ENCODE measurements at regions of chr20 and their contacts with region 1.

Region 1: DNA sequence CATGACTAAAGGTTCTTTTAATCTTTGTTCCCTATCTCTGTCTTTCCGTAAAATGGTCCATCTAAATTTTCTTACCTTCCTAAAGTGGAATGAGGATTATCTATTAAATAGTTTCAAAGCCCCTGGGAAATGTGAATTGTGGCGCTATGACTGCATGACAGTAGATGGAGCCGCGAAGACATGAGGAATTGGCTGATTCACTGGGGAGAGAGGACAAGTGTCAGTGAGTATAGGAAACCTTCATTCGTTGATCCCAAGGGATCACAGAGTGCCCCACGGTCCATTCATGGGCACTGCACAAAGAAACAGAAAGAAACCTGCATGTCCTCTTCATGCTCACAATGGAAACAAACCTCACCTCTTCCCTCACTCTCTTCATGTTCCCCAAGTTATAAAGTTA is 479.3 kb upstream of the BTBD3 start:
- DNase-seq: no peak
- H3K4me3 ChIP-seq: no peak overlapping the region
- H3K4me3 Mint-ChIP-seq: no peak overlapping the region
- H3K27ac Mint-ChIP-seq: no peak overlapping the region
- H3K4me1 ChIP-seq: peaks cover 9% of the 10 kb centered on the region; the same call in 1 of the 2 replicates
- H3K4me1 Mint-ChIP-seq: peaks cover 4% of the 10 kb centered on the region
- H3K27me3 ChIP-seq: no peaks in the 10 kb centered on the region
- H3K27me3 Mint-ChIP-seq: no peaks in the 10 kb centered on the region
- CTCF ChIP-seq: no peak

Region 2: GRCh38 chr20:11454966-11455799 is 16.8 kb after region 1 on chr20:
- CTCF ChIA-PET with region 1: no interaction called
- POLR2A ChIA-PET with region 1: no interaction called
- intact Hi-C with region 1: loop called (anchors 1 kb)
- DNase-seq: peak; percentile 82 to 92
- H3K4me3 ChIP-seq: peak overlapping the region; percentile 23
- H3K4me3 Mint-ChIP-seq: peak overlapping the region; percentile 73
- H3K27ac Mint-ChIP-seq: peak overlapping the region; percentile 92
- H3K4me1 ChIP-seq: peaks cover 69% of the 10 kb centered on the region
- H3K4me1 Mint-ChIP-seq: peaks cover 63% of the 10 kb centered on the region
- H3K27me3 ChIP-seq: no peaks in the 10 kb centered on the region
- H3K27me3 Mint-ChIP-seq: no peaks in the 10 kb centered on the region
- CTCF ChIP-seq: no peak

Region 3: DNA sequence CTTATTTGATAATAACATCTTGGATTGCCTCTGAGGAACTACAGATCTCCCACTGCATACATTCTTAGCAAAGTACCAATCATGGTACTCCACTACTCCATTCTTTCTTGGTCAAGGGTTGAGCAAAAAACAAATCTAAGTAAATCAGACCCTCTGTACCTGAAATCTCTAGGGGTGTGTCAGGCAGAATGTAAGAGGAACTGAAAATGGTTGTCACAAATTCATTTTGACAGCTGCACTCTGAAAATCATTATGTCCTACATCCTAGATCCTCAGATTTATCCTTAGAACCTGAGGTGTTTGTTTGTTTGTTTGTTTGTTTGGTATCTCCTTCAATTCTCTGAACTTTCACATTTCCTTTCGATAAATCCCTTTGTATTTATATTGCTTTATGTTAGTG is 46.1 kb after region 1 on chr20:
- CTCF ChIA-PET with region 1: no interaction called
- POLR2A ChIA-PET with region 1: no interaction called
- intact Hi-C with region 1: no loop called
- DNase-seq: no peak
- H3K4me3 ChIP-seq: no peak overlapping the region
- H3K4me3 Mint-ChIP-seq: no peak overlapping the region
- H3K27ac Mint-ChIP-seq: no peak overlapping the region
- H3K4me1 ChIP-seq: no peaks in the 10 kb centered on the region
- H3K4me1 Mint-ChIP-seq: no peaks in the 10 kb centered on the region
- H3K27me3 ChIP-seq: no peaks in the 10 kb centered on the region
- H3K27me3 Mint-ChIP-seq: no peaks in the 10 kb centered on the region
- CTCF ChIP-seq: no peak

Region 4: DNA sequence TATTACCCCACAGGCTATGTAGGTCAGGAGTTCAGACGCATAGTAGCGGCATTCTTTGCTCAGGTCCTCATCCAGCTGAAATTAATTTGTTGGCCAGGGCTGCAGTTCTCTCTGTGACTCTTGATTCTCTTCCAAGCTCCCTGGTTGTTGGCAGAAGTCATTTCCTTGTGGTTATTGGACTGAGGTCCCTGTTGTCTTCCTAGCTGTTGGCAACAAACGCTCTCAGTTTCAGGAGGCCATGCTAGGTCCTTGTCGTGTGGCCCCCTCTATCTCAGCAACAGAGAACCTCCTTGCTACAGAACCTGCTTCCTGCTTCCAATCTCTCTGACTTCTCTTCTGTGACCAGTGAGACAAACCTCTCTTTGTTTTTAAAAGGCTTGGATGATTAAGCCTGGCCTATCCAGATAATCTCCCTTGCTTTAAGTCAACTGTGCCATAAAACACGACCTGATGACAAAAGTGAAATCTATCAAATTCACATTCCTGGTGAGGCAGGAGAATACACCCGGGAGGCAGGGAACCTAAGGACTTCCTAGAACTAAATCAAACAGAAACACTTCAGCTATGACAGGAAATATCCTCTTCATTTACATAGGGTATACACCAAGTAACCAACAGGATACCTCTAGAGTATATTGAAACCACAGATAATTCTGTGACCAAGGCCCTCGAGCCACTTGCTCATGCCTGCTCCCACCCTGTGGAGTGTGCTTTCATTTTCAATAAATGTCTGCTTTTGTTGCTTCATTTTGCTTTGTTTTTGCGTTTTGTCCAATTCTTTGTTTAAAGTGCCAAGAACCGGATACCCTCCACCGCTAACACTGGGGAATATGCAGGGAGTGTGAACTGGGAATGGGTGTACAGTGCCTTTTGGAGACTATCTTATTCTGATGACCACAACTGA is 675.3 kb after region 1 on chr20:
- CTCF ChIA-PET with region 1: no interaction called
- POLR2A ChIA-PET with region 1: no interaction called
- intact Hi-C with region 1: no loop called
- DNase-seq: no peak
- H3K4me3 ChIP-seq: no peak overlapping the region
- H3K4me3 Mint-ChIP-seq: no peak overlapping the region
- H3K27ac Mint-ChIP-seq: no peak overlapping the region
- H3K4me1 ChIP-seq: no peaks in the 10 kb centered on the region
- H3K4me1 Mint-ChIP-seq: peaks cover 7% of the 10 kb centered on the region
- H3K27me3 ChIP-seq: no peaks in the 10 kb centered on the region
- H3K27me3 Mint-ChIP-seq: peaks cover 3% of the 10 kb centered on the region
- CTCF ChIP-seq: no peak

Measured in Caco-2 (cell line).